Gastrocnemius medialis (tissue), 4 donors: ENCODE measurements at regions of chr3 and their contacts with region 1.

Region 1: GRCh38 chr3:132722164-132723024 is at the start of gene NPHP3:
- DNase-seq: peak; percentile 96 to 98
- ATAC-seq: peak; percentile 84 to 87
- H3K4me3 ChIP-seq: peak within 1 kb of the TSS; percentile 77 to 99 (median 88)
- H3K27ac ChIP-seq: peak within 1 kb of the TSS; percentile 83 to 100 (median 94)
- H3K4me1 ChIP-seq: peaks cover 21 to 33% of the 10 kb centered on the region in 2 donors
- H3K27me3 ChIP-seq: no peaks in the 10 kb centered on the region
- CTCF ChIP-seq: peak in 3 of 5 experiments; percentile 12 to 43 (median 19)
- POLR2A ChIP-seq: peak; percentile 87 to 91
- total RNA-seq, gene NPHP3: 6.3 to 13.4 (median 10.6) TPM

Region 2: DNA sequence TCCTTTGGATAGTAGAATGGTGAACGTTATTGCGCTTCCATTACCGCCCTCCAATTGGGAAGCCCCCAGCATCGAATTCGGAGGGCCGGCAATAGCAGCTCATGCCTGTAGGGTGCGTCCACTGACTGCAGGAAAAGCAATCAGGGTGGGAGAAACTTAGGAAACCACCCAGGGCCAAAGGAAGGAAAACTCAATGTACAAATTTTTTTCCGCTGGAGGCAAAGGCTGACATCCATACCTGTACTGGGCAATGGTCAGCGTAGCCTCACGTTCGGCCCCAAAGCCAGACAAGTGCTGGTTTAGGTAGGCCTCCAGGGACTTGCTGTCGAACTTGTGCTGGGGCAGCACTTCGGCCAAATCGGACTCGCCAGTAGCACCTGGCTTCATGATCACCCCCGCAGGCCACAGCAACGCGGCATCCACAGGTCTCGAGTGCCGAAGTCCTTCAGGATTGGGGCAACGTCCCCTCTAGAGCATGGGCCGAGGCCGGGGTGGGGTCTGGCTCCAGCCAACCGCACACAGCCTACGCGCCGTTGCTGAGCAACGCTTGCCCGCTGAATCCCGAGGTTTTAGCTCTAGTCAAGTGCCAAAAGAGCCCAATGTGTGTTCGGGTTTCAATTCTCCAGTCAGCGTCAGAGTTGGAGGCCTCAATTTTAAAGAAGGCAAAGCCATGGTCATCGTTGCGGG is 62.9 kb before region 1 on chr3 and contains the start of gene ACAD11:
- in situ Hi-C with region 1: no loop called
- intact Hi-C with region 1: loop called (anchors 2 kb)
- DNase-seq: peak; percentile 47 to 60
- ATAC-seq: peak; percentile 73
- H3K4me3 ChIP-seq: peak within 1 kb of the TSS; percentile 77 to 88 (median 80)
- H3K27ac ChIP-seq: peak within 1 kb of the TSS; percentile 87 to 91 (median 90)
- H3K4me1 ChIP-seq: peaks cover 29 to 37% of the 10 kb centered on the region in 2 donors
- H3K27me3 ChIP-seq: no peaks in the 10 kb centered on the region
- CTCF ChIP-seq: peak; percentile 46 to 77 (median 56)
- POLR2A ChIP-seq: peak; percentile 33 to 36
- total RNA-seq, gene ACAD11: 2.2 to 12.4 (median 4.4) TPM

Region 3: GRCh38 chr3:133040696-133041523 is 318.5 kb after region 1 on chr3:
- in situ Hi-C with region 1: loop called in 3 of 4 experiments (anchors 25 kb)
- intact Hi-C with region 1: loop called (anchors 2 kb)
- DNase-seq: peak; percentile 52 to 71
- ATAC-seq: peak; percentile 71 to 77
- H3K4me3 ChIP-seq: peak overlapping the region in 3 of 4 donors; percentile 9 to 26 (median 19)
- H3K27ac ChIP-seq: peak overlapping the region; percentile 50 to 68 (median 55)
- H3K4me1 ChIP-seq: peaks cover 10 to 27% of the 10 kb centered on the region in 2 donors
- H3K27me3 ChIP-seq: no peaks in the 10 kb centered on the region
- CTCF ChIP-seq: peak; percentile 59 to 82 (median 70)
- POLR2A ChIP-seq: no peak

Region 4: GRCh38 chr3:133426721-133427120 is 704.3 kb after region 1 on chr3:
- in situ Hi-C with region 1: loop called in 1 of 4 experiments (anchors 10 kb)
- intact Hi-C with region 1: no loop called
- DNase-seq: no peak
- ATAC-seq: no peak
- H3K4me3 ChIP-seq: no peak overlapping the region
- H3K27ac ChIP-seq: no peak overlapping the region
- H3K4me1 ChIP-seq: peaks cover 0 to 3% of the 10 kb centered on the region in 2 donors
- H3K27me3 ChIP-seq: no peaks in the 10 kb centered on the region
- CTCF ChIP-seq: no peak
- POLR2A ChIP-seq: no peak

Region 5: GRCh38 chr3:133578548-133579191 is 856.3 kb after region 1 on chr3:
- in situ Hi-C with region 1: loop called in 3 of 4 experiments (anchors 10 to 25 kb)
- intact Hi-C with region 1: loop called (anchors 2 kb)
- DNase-seq: no peak
- ATAC-seq: no peak
- H3K4me3 ChIP-seq: no peak overlapping the region
- H3K27ac ChIP-seq: peak overlapping the region in 1 of 4 donors; percentile 42
- H3K4me1 ChIP-seq: peaks cover 37 to 45% of the 10 kb centered on the region in 2 donors
- H3K27me3 ChIP-seq: no peaks in the 10 kb centered on the region
- CTCF ChIP-seq: peak in 2 of 5 experiments; percentile 23 to 46
- POLR2A ChIP-seq: no peak

Region 6: GRCh38 chr3:133805527-133806475 is 1083.4 kb after region 1 on chr3 and contains the start of gene SRPRB:
- in situ Hi-C with region 1: loop called in 1 of 4 experiments (anchors 25 kb)
- intact Hi-C with region 1: loop called (anchors 5 kb)
- DNase-seq: peak; percentile 92 to 93
- ATAC-seq: peak; percentile 98 to 99
- H3K4me3 ChIP-seq: peak within 1 kb of the TSS; percentile 74 to 96 (median 87)
- H3K27ac ChIP-seq: peak within 1 kb of the TSS; percentile 72 to 85 (median 80)
- H3K4me1 ChIP-seq: peaks cover 6 to 11% of the 10 kb centered on the region in 2 donors
- H3K27me3 ChIP-seq: no peaks in the 10 kb centered on the region
- CTCF ChIP-seq: no peak
- POLR2A ChIP-seq: peak; percentile 36 to 55
- total RNA-seq, gene SRPRB: 19.0 to 22.3 (median 20.6) TPM

Region 7: DNA sequence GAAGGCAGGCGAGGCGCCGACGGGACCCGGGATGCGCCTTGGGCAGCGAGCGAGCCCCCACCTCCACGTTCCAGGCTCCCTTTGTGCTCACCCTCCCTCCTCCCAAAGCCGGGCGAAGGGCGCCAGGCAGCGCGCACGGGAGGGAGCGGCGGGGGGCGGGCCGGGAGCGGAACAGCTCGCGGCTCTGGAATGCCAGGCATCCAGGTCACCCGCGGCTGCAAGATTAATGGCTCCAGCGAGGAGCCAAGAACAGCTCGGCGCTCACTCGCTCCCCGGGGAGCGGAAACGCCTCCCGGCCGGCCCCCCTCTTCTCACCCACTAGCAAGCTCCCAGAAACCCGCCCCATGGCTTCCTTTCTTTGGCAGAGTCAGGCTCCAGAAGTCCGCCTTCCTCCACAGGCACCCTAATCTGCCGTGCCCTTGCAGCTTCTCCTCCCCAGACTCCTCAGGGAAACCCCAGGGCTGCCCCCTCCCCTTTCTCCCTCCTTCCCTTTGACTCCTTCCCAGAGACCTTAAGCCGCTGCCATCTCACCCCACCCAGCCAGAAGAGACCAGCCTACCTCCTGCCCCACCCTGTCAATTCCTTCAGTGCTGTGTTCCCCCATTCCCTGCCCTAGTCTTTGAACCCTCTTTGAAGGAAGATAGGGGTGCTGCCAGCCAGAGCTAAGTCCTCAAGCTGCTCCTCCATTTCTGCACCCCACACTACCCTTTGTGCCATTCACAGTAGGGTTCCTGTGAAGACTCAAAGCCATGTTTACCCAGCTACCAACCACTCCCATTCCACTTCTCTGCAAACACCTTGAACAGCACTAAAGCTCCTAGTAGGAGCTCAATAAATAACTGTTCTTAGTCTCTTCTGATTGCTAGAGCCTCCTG is 1641.9 kb after region 1 on chr3:
- in situ Hi-C with region 1: no loop called
- intact Hi-C with region 1: loop called (anchors 10 kb)
- DNase-seq: peak; percentile 88 to 95
- ATAC-seq: peak; percentile 82 to 87
- H3K4me3 ChIP-seq: peak overlapping the region; percentile 39 to 49 (median 44)
- H3K27ac ChIP-seq: peak overlapping the region; percentile 72 to 99 (median 97)
- H3K4me1 ChIP-seq: peaks cover 81 to 98% of the 10 kb centered on the region in 2 donors
- H3K27me3 ChIP-seq: no peaks in the 10 kb centered on the region
- CTCF ChIP-seq: no peak
- POLR2A ChIP-seq: no peak